ENCODE measurements at regions of chr5 and their contacts with region 1.

Region 1: GRCh38 chr5:10452768-10453331 is 11.2 kb downstream of the ROPN1L start:
- DNase-seq: no peak
- ATAC-seq: peak; percentile 94
- H3K4me3 Mint-ChIP-seq: no peak overlapping the region
- H3K27ac Mint-ChIP-seq: no peak overlapping the region
- H3K4me1 Mint-ChIP-seq: peaks cover 5% of the 10 kb centered on the region
- H3K27me3 Mint-ChIP-seq: no peaks in the 10 kb centered on the region
- CTCF ChIP-seq: peak; percentile 39

Region 2: GRCh38 chr5:10145923-10146401 is 306.9 kb before region 1 on chr5:
- CTCF ChIA-PET with region 1: no interaction called
- POLR2A ChIA-PET with region 1: no interaction called
- intact Hi-C with region 1: no loop called
- DNase-seq: no peak
- ATAC-seq: no peak
- H3K4me3 Mint-ChIP-seq: no peak overlapping the region
- H3K27ac Mint-ChIP-seq: no peak overlapping the region
- H3K4me1 Mint-ChIP-seq: no peaks in the 10 kb centered on the region
- H3K27me3 Mint-ChIP-seq: no peaks in the 10 kb centered on the region
- CTCF ChIP-seq: no peak

Region 3: DNA sequence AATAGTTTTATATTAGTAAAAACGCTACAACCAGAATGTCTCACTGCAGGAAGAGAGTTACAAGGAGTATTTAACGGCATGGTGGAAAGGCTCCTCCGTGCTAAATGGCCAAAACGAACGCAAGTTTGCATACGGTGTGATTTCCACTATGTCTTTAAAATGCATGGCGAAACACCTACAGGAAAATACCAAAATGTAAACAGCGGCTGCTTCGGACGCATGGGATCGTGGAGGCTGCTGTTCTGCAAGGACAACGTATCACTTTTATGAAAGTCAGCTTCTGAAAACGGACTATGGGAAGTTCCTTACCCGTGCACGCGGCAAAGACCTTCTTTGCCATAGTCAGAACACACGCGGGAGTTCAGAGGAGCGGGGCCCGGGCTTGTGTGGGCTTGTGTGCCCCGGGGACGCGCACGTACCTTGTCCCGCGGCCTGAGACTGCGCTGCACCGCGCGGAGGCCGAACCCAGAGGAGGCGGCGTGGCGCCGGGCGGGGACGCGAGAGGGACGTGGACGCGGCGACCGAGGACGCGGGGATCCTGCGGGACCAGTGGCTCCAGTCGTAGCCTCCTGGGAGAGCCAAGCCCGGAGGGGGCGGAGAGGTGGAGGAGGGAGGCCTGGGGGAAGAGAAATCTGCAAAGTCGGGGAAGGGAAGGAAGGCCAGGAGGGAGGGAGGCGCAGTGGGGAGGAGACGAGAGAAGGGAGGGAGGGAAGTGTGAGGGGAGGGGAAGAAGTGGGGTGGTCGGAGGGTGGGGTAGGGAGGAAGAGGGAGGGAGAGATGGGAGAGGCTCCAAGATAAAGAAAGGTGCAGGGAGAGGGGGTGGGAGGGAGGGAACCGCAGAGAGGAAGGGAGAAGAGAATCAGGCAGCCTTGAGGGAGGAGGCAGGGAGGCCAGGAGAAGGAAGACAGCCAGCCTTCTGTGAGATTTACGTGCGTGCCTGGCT is 145.4 kb before region 1 on chr5 and contains the start of gene CMBL:
- CTCF ChIA-PET with region 1: no interaction called
- POLR2A ChIA-PET with region 1: no interaction called
- intact Hi-C with region 1: no loop called
- DNase-seq: peak; percentile 25
- ATAC-seq: peak; percentile 67
- H3K4me3 Mint-ChIP-seq: peak within 1 kb of the TSS; percentile 73
- H3K27ac Mint-ChIP-seq: no peak within 1 kb of the TSS
- H3K4me1 Mint-ChIP-seq: peaks cover 11% of the 10 kb centered on the region
- H3K27me3 Mint-ChIP-seq: peaks cover 32% of the 10 kb centered on the region
- CTCF ChIP-seq: no peak
- total RNA-seq, gene CMBL: not detected in 2 replicates

Region 4: GRCh38 chr5:10489810-10490426 is 37.1 kb after region 1 on chr5:
- CTCF ChIA-PET with region 1: interaction called, 14 read pairs
- POLR2A ChIA-PET with region 1: no interaction called
- intact Hi-C with region 1: no loop called
- DNase-seq: no peak
- ATAC-seq: peak; percentile 98
- H3K4me3 Mint-ChIP-seq: peak overlapping the region; percentile 58
- H3K27ac Mint-ChIP-seq: peak overlapping the region; percentile 56
- H3K4me1 Mint-ChIP-seq: peaks cover 47% of the 10 kb centered on the region
- H3K27me3 Mint-ChIP-seq: no peaks in the 10 kb centered on the region
- CTCF ChIP-seq: no peak

Region 5: DNA sequence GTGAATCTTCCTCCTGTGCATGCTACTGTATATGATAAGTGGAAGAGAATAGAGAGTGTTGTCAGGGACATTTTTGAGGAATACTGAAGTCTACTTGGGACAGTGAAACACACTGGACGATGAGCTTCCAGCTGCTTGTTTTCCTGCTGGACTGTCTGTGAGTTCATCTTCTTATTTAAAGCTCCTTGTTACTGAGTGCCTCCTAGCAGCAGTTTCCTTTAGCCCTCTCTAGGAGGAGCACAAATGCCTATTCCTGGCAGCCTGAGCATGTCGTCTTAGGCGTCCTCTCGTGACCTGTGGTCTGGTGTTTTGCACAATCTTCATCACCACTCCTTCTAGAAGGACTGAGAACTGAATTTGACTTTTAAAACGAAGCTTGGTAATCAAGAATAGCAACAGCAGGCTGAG is 154.8 kb after region 1 on chr5:
- CTCF ChIA-PET with region 1: interaction called, 7 read pairs
- POLR2A ChIA-PET with region 1: no interaction called
- intact Hi-C with region 1: loop called (anchors 5 kb)
- DNase-seq: no peak
- ATAC-seq: peak; percentile 35
- H3K4me3 Mint-ChIP-seq: peak overlapping the region; percentile 80
- H3K27ac Mint-ChIP-seq: peak overlapping the region; percentile 90
- H3K4me1 Mint-ChIP-seq: peaks cover 67% of the 10 kb centered on the region
- H3K27me3 Mint-ChIP-seq: no peaks in the 10 kb centered on the region
- CTCF ChIP-seq: no peak

Region 6: GRCh38 chr5:10689391-10690081 is 236.7 kb after region 1 on chr5:
- CTCF ChIA-PET with region 1: interaction called, 21 read pairs
- POLR2A ChIA-PET with region 1: no interaction called
- intact Hi-C with region 1: loop called (anchors 1 kb)
- DNase-seq: no peak
- ATAC-seq: peak; percentile 73
- H3K4me3 Mint-ChIP-seq: no peak overlapping the region
- H3K27ac Mint-ChIP-seq: no peak overlapping the region
- H3K4me1 Mint-ChIP-seq: peaks cover 18% of the 10 kb centered on the region
- H3K27me3 Mint-ChIP-seq: no peaks in the 10 kb centered on the region
- CTCF ChIP-seq: no peak

Region 7: DNA sequence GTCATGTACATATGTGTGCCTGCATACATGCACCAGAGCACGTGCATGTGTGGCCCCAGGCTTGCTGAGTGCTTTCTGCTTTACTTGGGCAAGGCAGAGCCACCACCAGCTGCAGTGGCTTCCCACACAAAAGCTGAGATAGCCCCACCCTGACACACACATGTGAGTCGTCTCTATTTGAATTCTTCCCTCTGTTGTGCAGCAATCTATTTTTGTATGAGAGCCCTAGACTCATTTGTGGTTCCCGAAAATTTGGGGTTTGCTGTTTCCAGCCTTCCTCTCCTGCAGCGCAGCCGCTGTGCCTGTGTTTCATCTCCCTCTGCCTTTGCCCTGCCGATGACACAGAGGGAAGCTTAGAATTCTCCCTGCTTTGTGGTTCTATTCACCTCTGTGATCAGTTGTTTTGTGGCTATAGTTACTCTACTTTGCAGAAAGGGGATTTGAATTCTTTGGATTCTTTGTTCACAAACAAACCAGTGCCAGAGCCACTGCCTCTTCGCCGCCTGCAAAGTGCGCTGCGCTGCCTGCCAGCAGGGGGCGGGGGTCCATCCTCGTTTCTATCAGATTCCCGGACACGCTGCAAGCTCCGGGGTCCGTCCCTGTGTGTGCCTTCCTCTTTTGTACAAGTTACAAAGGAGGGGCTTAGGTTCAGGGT is 404.0 kb after region 1 on chr5:
- CTCF ChIA-PET with region 1: interaction called, 3 read pairs
- POLR2A ChIA-PET with region 1: no interaction called
- intact Hi-C with region 1: loop called (anchors 2 kb)
- DNase-seq: peak; percentile 23
- ATAC-seq: no peak
- H3K4me3 Mint-ChIP-seq: no peak overlapping the region
- H3K27ac Mint-ChIP-seq: no peak overlapping the region
- H3K4me1 Mint-ChIP-seq: no peaks in the 10 kb centered on the region
- H3K27me3 Mint-ChIP-seq: peaks cover 20% of the 10 kb centered on the region
- CTCF ChIP-seq: peak; percentile 65

Region 8: GRCh38 chr5:11143456-11144267 is 690.8 kb after region 1 on chr5:
- CTCF ChIA-PET with region 1: no interaction called
- POLR2A ChIA-PET with region 1: no interaction called
- intact Hi-C with region 1: no loop called
- DNase-seq: peak; percentile 19
- ATAC-seq: peak; percentile 85
- H3K4me3 Mint-ChIP-seq: no peak overlapping the region
- H3K27ac Mint-ChIP-seq: no peak overlapping the region
- H3K4me1 Mint-ChIP-seq: peaks cover 5% of the 10 kb centered on the region
- H3K27me3 Mint-ChIP-seq: no peaks in the 10 kb centered on the region
- CTCF ChIP-seq: no peak

Region 9: DNA sequence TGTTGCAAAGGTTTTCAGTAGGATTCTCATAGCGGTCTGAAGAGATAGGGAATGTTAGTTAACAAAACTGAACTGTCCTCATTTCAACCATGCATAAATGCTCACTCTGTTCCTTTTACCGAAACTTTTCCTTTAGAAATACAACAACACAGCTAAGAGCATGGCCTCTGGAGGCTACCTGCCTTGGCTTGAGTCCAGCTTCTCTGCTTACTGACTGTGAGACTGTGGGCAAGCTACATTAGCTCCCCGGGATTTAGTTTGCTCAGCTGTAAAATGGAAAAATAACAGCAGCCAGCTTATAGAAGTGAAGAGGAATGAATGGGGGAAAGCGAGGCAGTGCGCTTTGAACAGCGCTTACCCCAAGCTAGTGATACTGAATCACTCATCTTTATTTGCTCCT is 816.0 kb after region 1 on chr5:
- CTCF ChIA-PET with region 1: no interaction called
- POLR2A ChIA-PET with region 1: no interaction called
- intact Hi-C with region 1: loop called (anchors 5 kb)
- DNase-seq: no peak
- ATAC-seq: no peak
- H3K4me3 Mint-ChIP-seq: no peak overlapping the region
- H3K27ac Mint-ChIP-seq: no peak overlapping the region
- H3K4me1 Mint-ChIP-seq: no peaks in the 10 kb centered on the region
- H3K27me3 Mint-ChIP-seq: peaks cover 2% of the 10 kb centered on the region
- CTCF ChIP-seq: no peak

Region 10: GRCh38 chr5:11494340-11494739 is 1041.5 kb after region 1 on chr5:
- CTCF ChIA-PET with region 1: no interaction called
- POLR2A ChIA-PET with region 1: no interaction called
- intact Hi-C with region 1: loop called (anchors 2 kb)
- DNase-seq: no peak
- ATAC-seq: no peak
- H3K4me3 Mint-ChIP-seq: no peak overlapping the region
- H3K27ac Mint-ChIP-seq: no peak overlapping the region
- H3K4me1 Mint-ChIP-seq: no peaks in the 10 kb centered on the region
- H3K27me3 Mint-ChIP-seq: no peaks in the 10 kb centered on the region
- CTCF ChIP-seq: no peak

Measured in activated B cell treated with CpG ODN at 0.5 μM for 24 hours (primary cell).